MCF 10A (cell line): ENCODE measurements at regions of chr5 and their contacts with region 1.

Region 1: GRCh38 chr5:151569132-151570046 is 21.7 kb downstream of the FAT2 start:
- DNase-seq: peak; percentile 42
- H3K4me3 Mint-ChIP-seq: no peak overlapping the region
- H3K27ac Mint-ChIP-seq: peak overlapping the region; percentile 57
- H3K4me1 Mint-ChIP-seq: peaks cover 54% of the 10 kb centered on the region
- H3K27me3 Mint-ChIP-seq: no peaks in the 10 kb centered on the region
- CTCF ChIP-seq: no peak

Region 2: GRCh38 chr5:151432210-151432609 is 137.2 kb before region 1 on chr5:
- CTCF ChIA-PET with region 1: no interaction called
- POLR2A ChIA-PET with region 1: no interaction called
- intact Hi-C with region 1: no loop called
- DNase-seq: no peak
- H3K4me3 Mint-ChIP-seq: no peak overlapping the region
- H3K27ac Mint-ChIP-seq: no peak overlapping the region
- H3K4me1 Mint-ChIP-seq: no peaks in the 10 kb centered on the region
- H3K27me3 Mint-ChIP-seq: peaks cover 17% of the 10 kb centered on the region
- CTCF ChIP-seq: no peak

Region 3: DNA sequence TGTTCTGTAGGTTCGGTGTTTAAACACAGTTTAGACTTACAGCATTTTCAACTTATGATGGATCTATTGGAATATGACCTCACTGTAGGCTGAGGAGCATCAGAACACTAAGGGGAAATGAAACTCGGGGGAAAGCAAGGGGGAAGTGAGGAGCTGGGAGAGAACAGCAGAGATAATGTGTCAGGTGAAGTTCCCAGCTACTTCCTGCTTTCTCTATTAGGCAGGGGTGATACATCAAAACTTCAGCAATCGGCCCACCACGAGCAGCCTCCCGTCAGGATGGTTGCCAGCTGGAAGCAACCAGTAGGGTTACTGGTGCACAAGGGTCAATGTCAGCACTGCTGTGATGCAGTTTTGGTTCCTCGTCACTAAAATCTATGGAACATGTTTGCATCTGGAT is 12.6 kb before region 1 on chr5:
- CTCF ChIA-PET with region 1: interaction called, 9 read pairs
- POLR2A ChIA-PET with region 1: interaction called, 34 read pairs
- intact Hi-C with region 1: no loop called
- DNase-seq: no peak
- H3K4me3 Mint-ChIP-seq: no peak overlapping the region
- H3K27ac Mint-ChIP-seq: no peak overlapping the region
- H3K4me1 Mint-ChIP-seq: no peaks in the 10 kb centered on the region
- H3K27me3 Mint-ChIP-seq: no peaks in the 10 kb centered on the region
- CTCF ChIP-seq: no peak

Region 4: GRCh38 chr5:151592855-151593408 is 23.5 kb after region 1 on chr5:
- CTCF ChIA-PET with region 1: interaction called, 37 read pairs
- POLR2A ChIA-PET with region 1: interaction called, 238 read pairs
- intact Hi-C with region 1: no loop called
- DNase-seq: no peak
- H3K4me3 Mint-ChIP-seq: no peak overlapping the region
- H3K27ac Mint-ChIP-seq: no peak overlapping the region
- H3K4me1 Mint-ChIP-seq: peaks cover 40% of the 10 kb centered on the region
- H3K27me3 Mint-ChIP-seq: no peaks in the 10 kb centered on the region
- CTCF ChIP-seq: no peak

Region 5: GRCh38 chr5:151612689-151613427 is 43.5 kb after region 1 on chr5:
- CTCF ChIA-PET with region 1: interaction called, 69 read pairs
- POLR2A ChIA-PET with region 1: interaction called, 304 read pairs
- intact Hi-C with region 1: loop called (anchors 5 kb)
- DNase-seq: peak; percentile 93
- H3K4me3 Mint-ChIP-seq: no peak overlapping the region
- H3K27ac Mint-ChIP-seq: peak overlapping the region; percentile 30
- H3K4me1 Mint-ChIP-seq: peaks cover 56% of the 10 kb centered on the region
- H3K27me3 Mint-ChIP-seq: no peaks in the 10 kb centered on the region
- CTCF ChIP-seq: no peak

Region 6: GRCh38 chr5:151628112-151628823 is 58.9 kb after region 1 on chr5:
- CTCF ChIA-PET with region 1: interaction called, 69 read pairs
- POLR2A ChIA-PET with region 1: interaction called, 304 read pairs
- intact Hi-C with region 1: no loop called
- DNase-seq: peak; percentile 99
- H3K4me3 Mint-ChIP-seq: no peak overlapping the region
- H3K27ac Mint-ChIP-seq: peak overlapping the region; percentile 50
- H3K4me1 Mint-ChIP-seq: peaks cover 53% of the 10 kb centered on the region
- H3K27me3 Mint-ChIP-seq: no peaks in the 10 kb centered on the region
- CTCF ChIP-seq: no peak

Region 7: GRCh38 chr5:151912360-151912759 is 343.0 kb after region 1 on chr5:
- CTCF ChIA-PET with region 1: no interaction called
- POLR2A ChIA-PET with region 1: no interaction called
- intact Hi-C with region 1: no loop called
- DNase-seq: no peak
- H3K4me3 Mint-ChIP-seq: no peak overlapping the region
- H3K27ac Mint-ChIP-seq: no peak overlapping the region
- H3K4me1 Mint-ChIP-seq: no peaks in the 10 kb centered on the region
- H3K27me3 Mint-ChIP-seq: peaks cover 14% of the 10 kb centered on the region
- CTCF ChIP-seq: no peak

Region 8: DNA sequence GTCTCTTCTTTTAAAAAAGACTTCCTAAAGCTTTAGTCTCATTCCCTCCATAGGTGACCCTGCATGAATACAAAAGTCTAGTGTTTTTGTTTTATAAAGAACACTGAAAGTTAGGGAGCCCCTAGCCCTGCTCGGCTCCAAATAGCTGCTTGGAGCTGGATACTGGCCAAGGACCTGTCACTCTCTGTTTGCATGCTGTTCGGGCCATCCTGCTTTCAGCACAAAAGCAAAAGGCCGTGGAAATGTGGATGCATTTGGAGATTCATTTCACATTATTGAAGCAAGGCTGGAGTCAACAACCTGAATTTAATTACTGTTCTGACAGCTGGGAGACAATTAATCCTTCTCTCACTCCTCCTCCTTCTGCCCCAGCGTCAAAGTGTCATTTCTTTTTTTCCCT is 987.4 kb after region 1 on chr5:
- CTCF ChIA-PET with region 1: no interaction called
- POLR2A ChIA-PET with region 1: no interaction called
- intact Hi-C with region 1: no loop called
- DNase-seq: no peak
- H3K4me3 Mint-ChIP-seq: no peak overlapping the region
- H3K27ac Mint-ChIP-seq: no peak overlapping the region
- H3K4me1 Mint-ChIP-seq: no peaks in the 10 kb centered on the region
- H3K27me3 Mint-ChIP-seq: no peaks in the 10 kb centered on the region
- CTCF ChIP-seq: no peak